ENCODE measurements at regions of chr11 and their contacts with region 1.

Region 1: DNA sequence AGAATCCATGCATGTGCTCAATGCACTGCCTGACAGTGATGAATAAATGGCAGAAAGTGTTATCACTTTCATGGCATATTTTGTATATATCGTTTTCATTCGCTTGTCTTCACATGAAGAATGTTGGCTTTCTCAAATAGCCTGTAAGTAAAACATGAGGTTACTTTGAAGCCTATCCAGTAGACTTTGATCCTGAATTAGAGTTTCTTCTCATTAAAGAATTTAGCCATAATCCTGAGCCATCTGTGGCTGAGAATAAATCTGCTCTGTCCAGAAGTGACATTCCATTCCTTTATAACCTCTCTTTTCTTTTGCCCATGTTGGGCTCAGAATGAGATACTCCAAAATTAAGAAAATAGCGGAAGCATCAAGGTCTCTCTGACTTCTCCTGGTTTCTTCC is 1071.7 kb upstream of the TENM4 start:
- DNase-seq: no peak
- H3K4me3 ChIP-seq: no peak overlapping the region
- H3K27ac ChIP-seq: no peak overlapping the region
- H3K4me1 ChIP-seq: no peaks in the 10 kb centered on the region
- H3K27me3 ChIP-seq: no peaks in the 10 kb centered on the region
- CTCF ChIP-seq: no peak
- POLR2A ChIP-seq: no peak

Region 2: DNA sequence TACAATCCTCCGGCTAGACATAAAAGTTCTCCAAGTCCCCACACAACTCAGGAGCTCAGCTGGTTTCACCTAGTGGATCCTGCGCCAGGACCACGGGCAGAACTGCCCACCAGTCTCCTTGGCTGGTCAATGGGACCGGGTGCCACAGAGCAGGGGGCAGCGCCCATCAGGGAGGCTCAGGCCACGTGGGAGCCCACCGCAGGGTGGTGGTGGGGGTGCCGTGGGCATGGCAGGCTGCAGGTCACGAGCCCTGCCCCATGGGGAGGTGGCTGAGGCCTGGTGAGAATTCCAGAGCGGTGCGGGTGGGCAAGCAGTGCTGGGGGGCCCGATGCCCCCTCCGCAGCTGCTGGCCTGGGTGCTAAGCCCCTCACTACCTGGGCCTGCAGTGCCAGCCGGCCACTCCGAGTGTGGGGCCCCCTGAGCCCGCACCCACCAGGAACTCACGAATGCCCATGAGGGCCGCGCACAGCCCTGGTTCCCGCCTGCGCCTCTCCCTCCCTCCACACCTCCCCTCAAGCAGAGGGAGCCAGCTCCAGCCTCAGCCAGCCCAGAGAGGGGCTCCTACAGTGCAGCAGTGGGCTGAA is 20.2 kb after region 1 on chr11:
- intact Hi-C with region 1: loop called (anchors 2 kb)
- DNase-seq: no peak
- H3K4me3 ChIP-seq: no peak overlapping the region
- H3K27ac ChIP-seq: no peak overlapping the region
- H3K4me1 ChIP-seq: no peaks in the 10 kb centered on the region
- H3K27me3 ChIP-seq: no peaks in the 10 kb centered on the region
- CTCF ChIP-seq: no peak
- POLR2A ChIP-seq: no peak